PC-3 (cell line): ENCODE measurements at regions of chr16 and their contacts with region 1.

Region 1: GRCh38 chr16:73047518-73048291 is at the start of gene ZFHX3:
- DNase-seq: peak; percentile 76
- ATAC-seq: peak; percentile 46
- H3K4me3 ChIP-seq: peak within 1 kb of the TSS; percentile 88
- H3K27ac ChIP-seq: peak within 1 kb of the TSS; percentile 95
- H3K4me1 ChIP-seq: peaks cover 70% of the 10 kb centered on the region
- H3K27me3 ChIP-seq: no peaks in the 10 kb centered on the region
- CTCF ChIP-seq: no peak
- total RNA-seq, gene ZFHX3: 3.5 and 4.5 TPM in 2 replicates

Region 2: DNA sequence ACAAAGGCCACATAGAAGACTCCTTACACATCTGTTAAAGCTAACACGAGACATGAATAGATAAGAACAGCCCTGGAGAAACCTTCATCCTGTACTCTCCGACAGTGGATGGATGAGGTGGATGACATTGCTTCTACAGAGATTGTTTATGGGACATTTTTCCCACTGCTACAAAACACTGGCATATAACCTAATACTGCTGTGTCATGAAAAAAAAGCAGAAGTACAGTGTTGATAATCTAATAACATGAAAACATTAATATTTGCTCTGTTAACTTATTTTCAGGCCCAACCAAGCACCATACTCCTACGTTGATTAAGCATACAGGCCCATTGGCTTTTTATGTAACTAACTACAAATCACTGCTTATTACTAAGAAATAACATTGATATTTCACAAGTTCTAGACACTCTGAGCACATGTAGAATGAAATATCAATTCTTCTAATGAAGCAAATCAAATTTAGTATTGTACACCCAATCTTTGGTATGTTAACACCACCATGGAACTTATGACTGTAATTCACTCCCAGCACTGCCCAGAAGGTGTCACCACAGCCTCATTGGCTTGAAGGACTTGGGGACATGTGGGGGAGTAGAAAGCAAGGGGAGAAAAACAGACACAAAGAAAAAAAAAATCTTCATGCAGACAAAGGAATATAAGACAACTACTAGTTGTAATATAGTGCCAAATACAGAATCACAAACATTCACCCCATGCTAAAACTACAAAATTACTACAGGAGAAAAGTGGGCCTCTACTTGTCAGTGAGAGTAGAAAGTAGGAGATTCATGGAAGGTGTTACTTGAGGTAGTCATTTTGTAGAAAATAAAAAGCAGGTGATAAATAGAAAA is 545.7 kb before region 1 on chr16:
- CTCF ChIA-PET with region 1: no interaction called
- POLR2A ChIA-PET with region 1: no interaction called
- intact Hi-C with region 1: loop called (anchors 5 kb)
- DNase-seq: peak; percentile 69
- ATAC-seq: peak; percentile 71
- H3K4me3 ChIP-seq: no peak overlapping the region
- H3K27ac ChIP-seq: no peak overlapping the region
- H3K4me1 ChIP-seq: no peaks in the 10 kb centered on the region
- H3K27me3 ChIP-seq: no peaks in the 10 kb centered on the region
- CTCF ChIP-seq: peak; percentile 88

Region 3: DNA sequence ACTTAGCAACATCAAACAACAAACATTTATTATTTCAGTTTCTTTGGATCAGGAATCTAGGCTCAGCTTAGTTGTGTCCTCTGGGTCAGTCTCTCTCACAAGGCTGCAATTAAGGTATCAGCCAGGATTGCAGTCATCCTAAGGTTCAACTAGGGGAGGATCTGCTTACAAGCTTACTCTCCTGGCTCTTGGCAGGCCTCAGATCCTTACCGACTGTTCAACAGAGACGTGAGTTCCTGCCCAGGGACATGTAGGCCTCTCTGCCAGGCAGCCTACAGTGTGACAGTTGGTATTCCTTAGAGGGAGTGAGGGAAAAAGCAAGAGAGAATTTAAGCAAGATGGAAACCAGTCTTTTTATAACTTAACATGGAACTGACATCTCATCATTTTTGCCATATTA is 293.8 kb before region 1 on chr16:
- CTCF ChIA-PET with region 1: no interaction called
- POLR2A ChIA-PET with region 1: no interaction called
- intact Hi-C with region 1: no loop called
- DNase-seq: no peak
- ATAC-seq: no peak
- H3K4me3 ChIP-seq: no peak overlapping the region
- H3K27ac ChIP-seq: no peak overlapping the region
- H3K4me1 ChIP-seq: no peaks in the 10 kb centered on the region
- H3K27me3 ChIP-seq: no peaks in the 10 kb centered on the region
- CTCF ChIP-seq: no peak

Region 4: DNA sequence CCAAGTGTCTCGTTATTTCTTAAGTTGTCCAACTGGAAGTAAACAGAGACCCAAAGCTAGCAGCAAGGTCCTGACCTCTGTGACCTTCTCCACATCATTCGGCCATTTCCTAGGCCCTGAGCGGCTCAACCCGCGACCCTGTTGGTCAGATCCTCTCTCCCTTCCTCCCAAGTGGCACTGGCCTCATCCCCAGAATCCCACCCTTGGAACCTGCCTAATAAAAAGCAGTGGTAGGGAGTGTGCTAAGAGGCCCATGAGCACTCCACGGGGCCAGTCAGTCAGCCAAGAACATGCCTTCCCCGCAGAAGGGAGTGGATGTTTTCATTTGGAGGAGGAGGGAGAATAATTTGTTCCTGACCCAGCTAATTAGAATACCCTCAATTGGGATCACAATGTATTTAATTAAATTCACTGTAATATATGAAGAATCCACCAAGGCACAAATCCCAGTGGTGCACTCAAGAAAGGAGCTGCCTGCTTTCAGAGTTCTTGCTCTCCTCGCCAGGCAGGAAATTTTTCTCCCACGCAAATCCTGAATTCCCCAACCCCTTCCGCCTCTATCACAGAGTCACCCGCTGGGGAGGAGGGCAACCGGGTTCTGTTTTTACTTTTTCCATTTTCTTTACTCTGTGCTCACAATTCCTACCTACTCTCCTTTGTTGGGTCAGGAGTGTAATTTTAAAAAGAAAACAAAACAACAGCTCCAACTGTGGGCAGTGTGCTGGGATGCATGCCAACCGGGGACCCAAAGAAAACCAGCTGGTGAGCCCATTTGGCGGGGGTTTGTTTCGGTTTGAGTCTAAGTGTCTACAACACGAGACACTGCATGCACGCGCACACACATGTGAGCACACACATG is 153.2 kb before region 1 on chr16:
- CTCF ChIA-PET with region 1: no interaction called
- POLR2A ChIA-PET with region 1: no interaction called
- intact Hi-C with region 1: no loop called
- DNase-seq: no peak
- ATAC-seq: no peak
- H3K4me3 ChIP-seq: no peak overlapping the region
- H3K27ac ChIP-seq: no peak overlapping the region
- H3K4me1 ChIP-seq: no peaks in the 10 kb centered on the region
- H3K27me3 ChIP-seq: no peaks in the 10 kb centered on the region
- CTCF ChIP-seq: no peak

Region 5: DNA sequence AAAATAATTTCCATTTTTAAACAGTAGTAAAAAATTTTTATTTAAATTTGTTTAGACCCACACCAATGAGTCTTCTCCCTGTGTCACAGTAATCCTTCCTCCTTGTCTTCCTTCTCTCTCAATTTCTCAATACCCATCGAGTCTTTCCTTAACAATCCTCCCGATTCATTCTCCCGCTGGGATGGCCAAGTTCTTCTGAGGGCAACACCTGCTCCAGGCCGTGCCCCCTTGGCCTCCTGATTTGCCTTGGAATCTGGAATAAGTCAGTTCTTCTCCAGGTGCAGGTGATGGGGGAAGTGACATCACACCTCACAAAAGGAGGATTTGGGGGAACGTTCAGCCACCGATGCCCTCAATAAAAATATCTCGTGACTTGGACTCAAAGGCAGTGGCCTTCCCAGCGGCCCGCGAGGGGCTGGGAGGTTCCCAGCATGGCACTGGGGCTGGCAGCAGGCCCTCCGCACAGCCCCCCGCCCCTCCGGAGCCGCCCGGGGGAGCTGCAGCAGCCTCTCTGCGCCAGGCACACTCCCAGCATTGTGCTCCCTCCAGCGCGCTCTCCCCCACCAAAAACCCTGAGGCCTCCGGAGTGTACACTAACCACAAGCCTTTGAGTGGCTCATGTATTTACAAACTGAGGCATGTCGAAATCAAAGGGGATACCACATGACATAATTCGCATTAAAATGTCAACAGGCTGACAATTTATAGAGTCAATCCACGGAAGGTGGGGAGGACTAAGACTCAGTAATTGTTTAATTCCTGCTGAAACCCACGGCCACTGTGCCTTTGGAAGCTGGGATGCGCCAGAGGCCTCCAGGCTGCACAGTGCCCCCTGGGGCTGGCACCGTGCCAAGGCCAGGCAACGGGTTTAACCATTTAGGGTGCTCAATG is 120.3 kb before region 1 on chr16:
- CTCF ChIA-PET with region 1: no interaction called
- POLR2A ChIA-PET with region 1: no interaction called
- intact Hi-C with region 1: loop called (anchors 5 kb)
- DNase-seq: peak; percentile 96
- ATAC-seq: peak; percentile 94
- H3K4me3 ChIP-seq: peak overlapping the region; percentile 62
- H3K27ac ChIP-seq: peak overlapping the region; percentile 92
- H3K4me1 ChIP-seq: peaks cover 44% of the 10 kb centered on the region
- H3K27me3 ChIP-seq: no peaks in the 10 kb centered on the region
- CTCF ChIP-seq: no peak

Region 6: DNA sequence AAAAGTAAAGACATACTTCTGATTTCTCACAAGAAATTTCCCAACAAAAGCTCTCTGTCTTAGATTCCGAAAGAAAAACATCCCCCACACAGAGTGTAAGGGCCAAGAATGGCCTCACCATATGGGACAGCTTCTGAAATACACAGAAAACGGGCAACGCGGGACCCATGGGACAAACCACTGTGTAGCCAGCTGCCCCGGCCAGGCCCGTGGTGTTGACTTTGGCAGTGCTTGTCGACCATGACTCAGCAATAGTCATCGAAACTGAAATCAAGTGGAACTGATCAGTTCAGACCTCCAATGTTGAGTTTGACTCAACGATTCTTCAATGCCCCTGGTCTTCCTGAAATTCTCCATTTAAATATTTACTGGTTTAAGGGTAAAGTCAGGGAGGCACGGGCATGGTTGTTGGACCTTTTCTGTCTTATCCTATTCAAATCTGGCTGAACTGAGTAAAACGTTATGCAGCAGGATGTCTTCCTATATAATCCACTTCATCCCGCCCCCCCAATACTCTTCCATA is 27.3 kb before region 1 on chr16:
- CTCF ChIA-PET with region 1: no interaction called
- POLR2A ChIA-PET with region 1: interaction called, 4 read pairs
- intact Hi-C with region 1: loop called (anchors 1 kb)
- DNase-seq: peak; percentile 94
- ATAC-seq: peak; percentile 87
- H3K4me3 ChIP-seq: peak overlapping the region; percentile 60; the same call in 1 of the 2 replicates
- H3K27ac ChIP-seq: peak overlapping the region; percentile 99
- H3K4me1 ChIP-seq: peaks cover 44% of the 10 kb centered on the region
- H3K27me3 ChIP-seq: no peaks in the 10 kb centered on the region
- CTCF ChIP-seq: no peak

Region 7: GRCh38 chr16:73196670-73197069 is 149.0 kb after region 1 on chr16:
- CTCF ChIA-PET with region 1: no interaction called
- POLR2A ChIA-PET with region 1: no interaction called
- intact Hi-C with region 1: loop called (anchors 5 kb)
- DNase-seq: peak; percentile 68
- ATAC-seq: peak; percentile 70
- H3K4me3 ChIP-seq: no peak overlapping the region
- H3K27ac ChIP-seq: no peak overlapping the region
- H3K4me1 ChIP-seq: no peaks in the 10 kb centered on the region
- H3K27me3 ChIP-seq: no peaks in the 10 kb centered on the region
- CTCF ChIP-seq: peak; percentile 69

Region 8: GRCh38 chr16:73878611-73879010 is 830.9 kb after region 1 on chr16:
- CTCF ChIA-PET with region 1: no interaction called
- POLR2A ChIA-PET with region 1: no interaction called
- intact Hi-C with region 1: no loop called
- DNase-seq: peak; percentile 62
- ATAC-seq: peak; percentile 61
- H3K4me3 ChIP-seq: no peak overlapping the region
- H3K27ac ChIP-seq: no peak overlapping the region
- H3K4me1 ChIP-seq: no peaks in the 10 kb centered on the region
- H3K27me3 ChIP-seq: peaks cover 43% of the 10 kb centered on the region
- CTCF ChIP-seq: peak; percentile 57